ENCODE measurements at regions of chr12 and their contacts with region 1.

Region 1: DNA sequence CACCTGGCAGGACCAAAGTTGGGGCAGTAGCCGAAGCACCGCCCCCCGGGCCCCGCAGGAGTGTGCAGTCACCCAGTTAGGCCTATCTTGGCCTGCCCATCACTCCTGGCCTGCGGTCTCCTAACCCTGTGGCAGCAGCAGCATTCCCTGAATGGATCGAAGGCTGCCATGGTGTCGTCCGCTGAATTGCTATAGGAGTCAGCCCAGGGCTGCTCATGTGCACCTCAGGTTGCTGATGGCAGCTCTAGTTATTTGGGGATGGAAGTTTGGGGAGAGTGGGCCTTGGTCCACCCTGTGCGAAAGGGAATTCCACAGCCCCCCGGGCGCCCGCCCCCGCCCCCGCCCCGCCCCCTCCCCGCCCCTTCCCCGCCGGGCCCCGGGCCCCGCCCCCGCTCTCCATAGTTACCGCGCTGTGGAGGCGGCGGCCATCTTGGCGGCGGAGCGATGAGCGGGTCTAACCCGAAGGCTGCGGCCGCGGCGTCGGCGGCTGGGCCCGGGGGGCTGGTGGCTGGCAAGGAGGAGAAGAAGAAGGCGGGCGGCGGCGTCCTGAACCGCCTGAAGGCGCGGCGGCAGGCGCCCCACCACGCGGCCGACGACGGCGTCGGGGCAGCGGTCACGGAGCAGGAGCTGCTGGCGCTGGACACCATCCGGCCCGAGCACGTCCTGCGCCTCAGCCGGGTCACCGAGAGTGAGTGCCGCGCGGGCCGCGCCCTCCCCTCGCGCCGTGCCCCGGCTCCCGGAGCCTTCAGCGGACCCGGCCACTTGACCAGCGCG is at the start of gene UNC119B:
- DNase-seq: peak; percentile 75 to 92 (median 90)
- ATAC-seq: peak; percentile 94
- H3K4me3 ChIP-seq: peak within 1 kb of the TSS; percentile 83
- H3K27ac ChIP-seq: peak within 1 kb of the TSS; percentile 71
- H3K4me1 ChIP-seq: peaks cover 7 to 17% of the 10 kb centered on the region in 2 experiments; a peak in 4 of 5 replicates
- H3K27me3 ChIP-seq: no peaks in the 10 kb centered on the region
- CTCF ChIP-seq: no peak
- EP300 ChIP-seq: no peak
- POLR2A ChIP-seq: peak; percentile 67
- RAD21 ChIP-seq: no peak
- polyA plus RNA-seq, gene UNC119B: 4.0 to 6.5 TPM

Region 2: GRCh38 chr12:120649442-120650232 is 60.6 kb before region 1 on chr12:
- CTCF ChIA-PET with region 1: interaction called, 14 read pairs
- POLR2A ChIA-PET with region 1: interaction called, 3 read pairs
- in situ Hi-C with region 1: no loop called
- intact Hi-C with region 1: loop called (anchors 1 kb)
- DNase-seq: no peak
- ATAC-seq: 0 out of 3 replicates have a peak, but pooled peaks have one; percentile 10
- H3K4me3 ChIP-seq: no peak overlapping the region
- H3K27ac ChIP-seq: no peak overlapping the region
- H3K4me1 ChIP-seq: peaks cover 3 to 6% of the 10 kb centered on the region in 2 experiments; a peak in 2 of 5 replicates
- H3K27me3 ChIP-seq: peaks cover 29 to 54% of the 10 kb centered on the region in 2 experiments
- CTCF ChIP-seq: peak in 1 of 3 experiments; percentile 9; a peak in 1 of 6 replicates
- EP300 ChIP-seq: no peak
- POLR2A ChIP-seq: no peak
- RAD21 ChIP-seq: no peak

Region 3: DNA sequence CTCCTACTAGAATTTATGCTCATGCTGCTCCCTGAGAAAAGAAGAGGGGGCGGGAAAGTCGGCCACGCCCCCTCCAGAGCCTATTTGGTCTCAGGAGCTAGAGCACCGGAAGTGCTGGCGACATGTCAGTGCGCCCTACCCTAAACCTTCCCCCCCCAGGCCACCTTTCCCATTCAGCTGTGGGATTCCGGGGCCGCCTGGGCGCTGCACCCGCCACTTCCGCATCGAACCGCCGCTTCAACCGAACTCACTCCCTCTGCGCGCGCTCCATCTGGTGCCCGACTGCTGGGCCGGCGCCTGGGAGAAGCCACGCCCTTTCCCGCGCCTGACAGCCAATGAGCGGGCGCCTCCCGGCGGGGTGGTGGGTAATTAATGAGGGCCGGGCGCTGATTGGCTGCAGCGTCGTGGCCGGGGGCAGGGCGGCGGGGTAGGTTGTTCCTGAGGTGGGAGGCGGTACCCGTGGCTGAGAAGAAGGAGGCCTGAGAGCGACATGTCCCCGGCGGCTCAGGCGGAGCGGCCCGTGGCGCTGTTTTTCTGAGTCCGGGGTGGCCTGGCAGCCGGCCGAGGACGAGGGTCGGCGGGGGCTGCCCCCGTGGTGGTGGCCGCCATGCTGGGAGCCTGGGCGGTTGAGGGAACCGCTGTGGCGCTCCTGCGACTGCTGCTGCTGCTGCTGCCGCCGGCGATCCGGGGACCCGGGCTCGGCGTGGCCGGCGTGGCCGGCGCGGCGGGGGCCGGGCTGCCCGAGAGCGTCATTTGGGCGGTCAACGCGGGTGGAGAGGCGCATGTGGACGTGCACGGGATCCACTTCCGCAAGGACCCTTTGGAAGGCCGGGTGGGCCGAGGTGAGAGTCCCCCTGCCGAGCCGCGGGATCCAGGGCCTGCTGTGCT is 23.3 kb before region 1 on chr12 and contains the start of gene MLEC:
- CTCF ChIA-PET with region 1: no interaction called
- POLR2A ChIA-PET with region 1: interaction called, 4 read pairs
- in situ Hi-C with region 1: no loop called
- intact Hi-C with region 1: loop called (anchors 2 kb)
- DNase-seq: peak; percentile 98 to 100 (median 100)
- ATAC-seq: peak; percentile 92
- H3K4me3 ChIP-seq: peak within 1 kb of the TSS; percentile 91
- H3K27ac ChIP-seq: peak within 1 kb of the TSS; percentile 91
- H3K4me1 ChIP-seq: peaks cover 14 to 17% of the 10 kb centered on the region in 2 experiments; a peak in 3 of 5 replicates
- H3K27me3 ChIP-seq: no peaks in the 10 kb centered on the region
- CTCF ChIP-seq: peak; percentile 26 to 65 (median 52); a peak in 4 of 6 replicates
- EP300 ChIP-seq: peak; percentile 70
- POLR2A ChIP-seq: peak; percentile 80
- RAD21 ChIP-seq: peak; percentile 49 to 65
- polyA plus RNA-seq, gene MLEC: 18.5 to 20.5 TPM

Region 4: GRCh38 chr12:120698665-120699064 is 11.6 kb before region 1 on chr12:
- CTCF ChIA-PET with region 1: no interaction called
- POLR2A ChIA-PET with region 1: interaction called, 24 read pairs
- in situ Hi-C with region 1: no loop called
- intact Hi-C with region 1: no loop called
- DNase-seq: no peak
- ATAC-seq: no peak
- H3K4me3 ChIP-seq: no peak overlapping the region
- H3K27ac ChIP-seq: no peak overlapping the region
- H3K4me1 ChIP-seq: no peaks in the 10 kb centered on the region
- H3K27me3 ChIP-seq: no peaks in the 10 kb centered on the region
- CTCF ChIP-seq: no peak
- EP300 ChIP-seq: no peak
- POLR2A ChIP-seq: no peak
- RAD21 ChIP-seq: no peak

Region 5: GRCh38 chr12:120720234-120720986 is 10.2 kb after region 1 on chr12:
- CTCF ChIA-PET with region 1: no interaction called
- POLR2A ChIA-PET with region 1: interaction called, 22 read pairs
- in situ Hi-C with region 1: no loop called
- intact Hi-C with region 1: no loop called
- DNase-seq: peak in 3 of 4 experiments; percentile 38 to 75 (median 51)
- ATAC-seq: peak; percentile 81
- H3K4me3 ChIP-seq: no peak overlapping the region
- H3K27ac ChIP-seq: peak overlapping the region; percentile 58
- H3K4me1 ChIP-seq: peaks cover 29 to 37% of the 10 kb centered on the region in 2 experiments; a peak in 4 of 5 replicates
- H3K27me3 ChIP-seq: no peaks in the 10 kb centered on the region
- CTCF ChIP-seq: no peak
- EP300 ChIP-seq: no peak
- POLR2A ChIP-seq: no peak
- RAD21 ChIP-seq: no peak

Region 6: DNA sequence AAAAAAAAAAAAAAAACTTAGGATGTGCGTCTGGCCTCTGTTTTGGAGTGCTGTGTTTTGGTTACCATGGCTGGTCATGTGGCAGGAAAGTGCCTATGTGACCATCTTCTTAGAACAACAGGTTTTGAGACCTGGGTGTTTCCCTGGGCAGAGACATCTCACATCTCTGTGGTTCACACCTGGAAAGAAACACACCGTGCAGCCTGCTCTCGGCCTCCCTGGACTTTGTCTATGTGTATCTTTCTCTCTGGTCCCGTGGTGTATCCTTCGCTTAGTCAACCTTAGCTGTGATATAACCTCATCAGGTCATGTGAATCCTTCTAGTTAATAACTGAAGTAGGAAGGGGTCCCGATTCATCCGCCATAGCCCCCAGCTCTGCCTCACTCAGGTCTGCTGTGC is 38.0 kb after region 1 on chr12:
- CTCF ChIA-PET with region 1: no interaction called
- POLR2A ChIA-PET with region 1: no interaction called
- in situ Hi-C with region 1: no loop called
- intact Hi-C with region 1: no loop called
- DNase-seq: no peak
- ATAC-seq: no peak
- H3K4me3 ChIP-seq: no peak overlapping the region
- H3K27ac ChIP-seq: no peak overlapping the region
- H3K4me1 ChIP-seq: peaks cover 3 to 5% of the 10 kb centered on the region in 2 experiments; a peak in 2 of 5 replicates
- H3K27me3 ChIP-seq: no peaks in the 10 kb centered on the region
- CTCF ChIP-seq: no peak
- EP300 ChIP-seq: no peak
- POLR2A ChIP-seq: no peak
- RAD21 ChIP-seq: no peak

Region 7: GRCh38 chr12:120833849-120834248 is 123.6 kb after region 1 on chr12:
- CTCF ChIA-PET with region 1: no interaction called
- POLR2A ChIA-PET with region 1: no interaction called
- in situ Hi-C with region 1: no loop called
- intact Hi-C with region 1: no loop called
- DNase-seq: no peak
- ATAC-seq: no peak
- H3K4me3 ChIP-seq: no peak overlapping the region
- H3K27ac ChIP-seq: no peak overlapping the region
- H3K4me1 ChIP-seq: peaks cover 5 to 13% of the 10 kb centered on the region in 2 experiments; a peak in 3 of 5 replicates
- H3K27me3 ChIP-seq: no peaks in the 10 kb centered on the region
- CTCF ChIP-seq: no peak
- EP300 ChIP-seq: no peak
- POLR2A ChIP-seq: no peak
- RAD21 ChIP-seq: no peak

Region 8: GRCh38 chr12:120979862-120980696 is 269.9 kb after region 1 on chr12:
- CTCF ChIA-PET with region 1: no interaction called
- POLR2A ChIA-PET with region 1: no interaction called
- in situ Hi-C with region 1: no loop called
- intact Hi-C with region 1: no loop called
- DNase-seq: no peak
- ATAC-seq: peak; percentile 27; the same call in 1 of the 3 replicates
- H3K4me3 ChIP-seq: no peak overlapping the region
- H3K27ac ChIP-seq: no peak overlapping the region
- H3K4me1 ChIP-seq: peaks cover 0 to 10% of the 10 kb centered on the region in 2 experiments; a peak in 1 of 5 replicates
- H3K27me3 ChIP-seq: no peaks in the 10 kb centered on the region
- CTCF ChIP-seq: no peak
- EP300 ChIP-seq: no peak
- POLR2A ChIP-seq: no peak
- RAD21 ChIP-seq: no peak

Measured in K562 (cell line).